Activated naive CD4-positive, alpha-beta T cell treated with anti-CD3 and anti-CD28 coated beads, Interleukin-2, amount 10 ng/mL, durations not matched to agents 7 days and 5 days (primary cell): ENCODE measurements at regions of chr3 and their contacts with region 1.

Region 1: GRCh38 chr3:39288300-39288808 is 8.5 kb upstream of the CX3CR1 start:
- DNase-seq: peak; percentile 90
- H3K4me3 Mint-ChIP-seq: no peak overlapping the region
- H3K27ac Mint-ChIP-seq: no peak overlapping the region
- H3K4me1 Mint-ChIP-seq: peaks cover 39% of the 10 kb centered on the region
- H3K27me3 Mint-ChIP-seq: peaks cover 3% of the 10 kb centered on the region

Region 2: GRCh38 chr3:39126532-39127071 is 161.8 kb before region 1 on chr3:
- CTCF ChIA-PET with region 1: interaction called, 83 read pairs
- DNase-seq: peak; percentile 57
- H3K4me3 Mint-ChIP-seq: no peak overlapping the region
- H3K27ac Mint-ChIP-seq: peak overlapping the region; percentile 39
- H3K4me1 Mint-ChIP-seq: peaks cover 32% of the 10 kb centered on the region
- H3K27me3 Mint-ChIP-seq: peaks cover 20% of the 10 kb centered on the region

Region 3: GRCh38 chr3:39196671-39197356 is 91.5 kb before region 1 on chr3:
- CTCF ChIA-PET with region 1: interaction called, 358 read pairs
- DNase-seq: no peak
- H3K4me3 Mint-ChIP-seq: no peak overlapping the region
- H3K27ac Mint-ChIP-seq: no peak overlapping the region
- H3K4me1 Mint-ChIP-seq: no peaks in the 10 kb centered on the region
- H3K27me3 Mint-ChIP-seq: peaks cover 32% of the 10 kb centered on the region

Region 4: DNA sequence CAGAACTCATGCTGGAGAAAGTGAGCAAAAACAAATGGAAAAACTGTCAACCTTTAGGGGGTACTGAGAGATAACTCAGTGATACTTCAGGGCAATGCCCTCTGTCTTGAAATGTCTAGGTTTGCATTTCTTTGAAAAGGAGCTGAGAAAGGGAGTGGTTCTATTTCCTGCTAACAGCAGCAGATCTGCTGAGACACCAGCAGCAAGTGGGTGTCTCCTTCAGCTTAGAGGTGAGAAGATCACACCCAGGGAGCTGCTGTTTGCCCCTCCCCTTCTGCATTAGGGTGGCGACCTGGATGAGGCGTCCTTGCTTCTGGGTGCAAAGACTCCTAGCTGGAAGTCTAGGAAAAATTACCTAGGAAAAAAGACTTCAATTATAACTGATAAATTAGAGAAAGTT is 53.6 kb before region 1 on chr3:
- CTCF ChIA-PET with region 1: interaction called, 12 read pairs
- DNase-seq: peak; percentile 60
- H3K4me3 Mint-ChIP-seq: peak overlapping the region; percentile 43
- H3K27ac Mint-ChIP-seq: peak overlapping the region; percentile 80
- H3K4me1 Mint-ChIP-seq: peaks cover 32% of the 10 kb centered on the region
- H3K27me3 Mint-ChIP-seq: peaks cover 76% of the 10 kb centered on the region

Region 5: GRCh38 chr3:39329493-39329892 is 41.1 kb after region 1 on chr3 and contains the start of gene CCR8:
- CTCF ChIA-PET with region 1: interaction called, 10 read pairs
- DNase-seq: no peak
- H3K4me3 Mint-ChIP-seq: no peak within 1 kb of the TSS
- H3K27ac Mint-ChIP-seq: no peak within 1 kb of the TSS
- H3K4me1 Mint-ChIP-seq: peaks cover 30% of the 10 kb centered on the region
- H3K27me3 Mint-ChIP-seq: no peaks in the 10 kb centered on the region

Region 6: GRCh38 chr3:39433642-39434041 is 145.3 kb after region 1 on chr3:
- CTCF ChIA-PET with region 1: no interaction called
- DNase-seq: no peak
- H3K4me3 Mint-ChIP-seq: no peak overlapping the region
- H3K27ac Mint-ChIP-seq: no peak overlapping the region
- H3K4me1 Mint-ChIP-seq: no peaks in the 10 kb centered on the region
- H3K27me3 Mint-ChIP-seq: peaks cover 17% of the 10 kb centered on the region